ENCODE measurements at regions of chr12 and their contacts with region 1.

Region 1: GRCh38 chr12:27434673-27435565 is 11.6 kb upstream of the SMCO2 start:
- DNase-seq: peak in 1 of 2 experiments; percentile 26
- ATAC-seq: peak; percentile 79 to 87
- H3K4me3 ChIP-seq: no peak overlapping the region
- H3K27ac ChIP-seq: peak overlapping the region in 1 of 2 experiments; percentile 34; a peak in 2 of 6 replicates
- H3K4me1 ChIP-seq: no peaks in the 10 kb centered on the region
- CTCF ChIP-seq: peak; percentile 47
- EP300 ChIP-seq: no peak
- POLR2A ChIP-seq: no peak
- RAD21 ChIP-seq: peak; percentile 44 to 72

Region 2: DNA sequence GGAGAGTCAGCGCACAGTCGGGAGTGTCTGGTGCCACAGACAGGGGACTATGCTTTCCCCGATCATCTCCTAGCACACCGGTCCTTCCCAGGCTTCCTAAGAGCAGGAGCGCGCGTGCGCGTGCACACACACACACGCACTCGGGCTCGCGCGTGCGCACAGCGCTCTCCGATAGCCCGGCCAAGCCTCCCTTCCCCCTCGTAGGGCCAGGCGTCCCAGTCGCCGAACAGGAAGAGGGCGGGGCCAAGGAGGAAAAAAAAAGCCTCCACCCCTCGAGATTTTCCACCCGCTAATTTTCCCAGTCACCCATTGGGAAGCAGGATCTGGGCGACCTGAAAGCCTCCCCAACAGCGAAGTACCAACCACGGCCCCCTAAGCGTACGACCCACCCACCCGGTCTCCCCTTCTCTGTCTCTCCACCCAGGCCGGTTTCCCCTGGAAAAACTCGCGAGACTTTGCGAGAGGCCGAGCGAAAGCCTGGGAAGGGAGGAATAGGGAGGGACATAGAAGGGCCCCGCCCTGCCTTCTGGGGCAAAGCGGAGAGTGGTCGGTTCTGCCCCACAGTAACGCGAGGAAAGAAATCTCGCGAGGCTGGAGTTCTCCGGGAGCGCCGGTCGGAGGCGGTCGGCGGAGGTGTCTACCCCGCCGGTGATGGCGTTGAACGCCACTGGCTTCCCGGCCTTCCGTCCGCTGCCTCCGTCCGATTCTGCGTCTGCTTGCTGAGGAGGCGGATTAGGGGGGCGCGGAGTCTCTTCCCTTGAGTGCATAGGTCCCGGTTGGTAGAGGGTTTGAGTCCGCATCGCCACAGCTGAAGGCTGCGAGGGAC is 496.8 kb before region 1 on chr12 and contains the starts of genes FGFR1OP2 and INTS13:
- CTCF ChIA-PET with region 1: no interaction called
- POLR2A ChIA-PET with region 1: no interaction called
- DNase-seq: peak; percentile 94 to 99
- ATAC-seq: peak; percentile 92 to 98
- H3K4me3 ChIP-seq: peak within 1 kb of the TSS; percentile 94
- H3K27ac ChIP-seq: peak within 1 kb of the TSS; percentile 89 to 92
- H3K4me1 ChIP-seq: peaks cover 39% of the 10 kb centered on the region; the same call in 2 of the 3 replicates
- CTCF ChIP-seq: no peak
- EP300 ChIP-seq: no peak
- POLR2A ChIP-seq: peak; percentile 99
- RAD21 ChIP-seq: no peak
- polyA plus RNA-seq, gene FGFR1OP2: 37.0 and 51.1 TPM in 2 replicates
- polyA plus RNA-seq, gene INTS13: 41.2 and 71.7 TPM in 2 replicates

Region 3: DNA sequence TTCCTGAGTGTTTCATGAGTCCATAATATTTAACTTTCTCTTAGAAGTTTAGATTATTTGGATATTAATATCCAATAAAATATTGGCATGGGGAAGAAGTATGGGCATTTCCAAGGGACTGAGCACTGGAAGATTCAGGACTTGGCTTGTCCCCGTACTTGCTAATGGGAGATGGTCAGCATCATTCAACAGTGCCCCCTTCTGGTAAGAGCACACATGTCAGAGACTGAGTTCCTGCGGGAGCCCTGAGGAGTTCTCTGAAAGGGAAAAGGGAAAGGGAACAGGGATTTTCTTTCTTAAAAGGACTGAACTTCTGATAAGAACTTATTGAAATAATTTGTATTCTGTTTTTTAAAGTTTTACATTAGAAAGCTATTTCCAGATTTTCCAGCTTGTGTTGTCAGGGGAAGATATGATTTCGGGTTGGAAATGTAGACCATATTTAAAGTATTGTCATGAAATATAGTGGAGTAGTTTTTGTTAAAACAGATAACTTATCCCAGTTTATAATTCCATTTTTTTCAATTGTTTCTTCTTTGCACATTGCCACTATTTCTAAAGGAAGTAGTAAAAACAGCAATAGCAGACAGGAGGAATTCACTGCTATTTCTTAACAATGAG is 292.7 kb before region 1 on chr12:
- CTCF ChIA-PET with region 1: no interaction called
- POLR2A ChIA-PET with region 1: no interaction called
- DNase-seq: peak; percentile 73 to 84
- ATAC-seq: peak; percentile 95 to 98; a peak in 5 of 6 replicates
- H3K4me3 ChIP-seq: no peak overlapping the region
- H3K27ac ChIP-seq: no peak overlapping the region
- H3K4me1 ChIP-seq: 0 out of 3 replicates have a peak, but pooled peaks cover 8% of the 10 kb centered on the region
- CTCF ChIP-seq: peak; percentile 74
- EP300 ChIP-seq: no peak
- POLR2A ChIP-seq: no peak
- RAD21 ChIP-seq: peak; percentile 61 to 79

Region 4: GRCh38 chr12:27343255-27344000 is 91.5 kb before region 1 on chr12:
- CTCF ChIA-PET with region 1: no interaction called
- POLR2A ChIA-PET with region 1: no interaction called
- DNase-seq: peak; percentile 46 to 79
- ATAC-seq: peak; percentile 94 to 95
- H3K4me3 ChIP-seq: no peak overlapping the region
- H3K27ac ChIP-seq: peak overlapping the region; percentile 6 to 79; a peak in 5 of 6 replicates
- H3K4me1 ChIP-seq: peaks cover 31% of the 10 kb centered on the region
- CTCF ChIP-seq: no peak
- EP300 ChIP-seq: 0 out of 5 replicates have a peak, but pooled peaks of 1 of the 2 experiments have one; percentile 12
- POLR2A ChIP-seq: no peak
- RAD21 ChIP-seq: no peak

Region 5: DNA sequence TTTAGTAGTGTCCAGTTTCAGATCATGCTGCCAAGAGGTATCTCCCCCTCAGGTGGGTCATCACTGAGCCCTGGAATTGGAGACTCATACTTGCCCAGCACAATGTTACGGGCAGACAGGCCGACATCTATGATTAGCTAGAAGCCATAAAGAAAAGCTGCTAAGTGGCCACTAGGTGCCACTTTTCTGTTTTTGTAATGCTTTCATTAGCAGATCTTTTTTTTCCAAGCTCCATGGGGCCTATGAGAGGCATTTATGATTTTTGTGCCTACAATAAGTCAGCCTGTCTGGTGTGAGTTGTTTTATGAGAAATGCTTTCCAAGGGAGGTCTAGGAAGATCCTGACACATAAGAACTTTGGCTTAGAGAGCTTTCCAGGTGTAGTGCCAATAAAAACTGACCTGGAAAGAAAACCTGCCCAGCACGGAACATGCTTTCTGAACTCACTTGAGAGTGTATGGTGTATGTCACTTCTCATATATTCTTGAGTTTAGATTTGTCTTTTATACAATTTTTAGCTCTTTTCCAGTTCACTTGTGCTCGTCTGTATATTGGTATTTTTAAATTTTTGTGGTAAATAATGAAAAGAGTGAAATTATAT is 10.2 kb before region 1 on chr12:
- CTCF ChIA-PET with region 1: interaction called, 25 read pairs
- POLR2A ChIA-PET with region 1: no interaction called
- DNase-seq: peak; percentile 37 to 62
- ATAC-seq: peak; percentile 85 to 90
- H3K4me3 ChIP-seq: no peak overlapping the region
- H3K27ac ChIP-seq: no peak overlapping the region
- H3K4me1 ChIP-seq: no peaks in the 10 kb centered on the region
- CTCF ChIP-seq: peak; percentile 58
- EP300 ChIP-seq: no peak
- POLR2A ChIP-seq: no peak
- RAD21 ChIP-seq: peak; percentile 60 to 61

Region 6: DNA sequence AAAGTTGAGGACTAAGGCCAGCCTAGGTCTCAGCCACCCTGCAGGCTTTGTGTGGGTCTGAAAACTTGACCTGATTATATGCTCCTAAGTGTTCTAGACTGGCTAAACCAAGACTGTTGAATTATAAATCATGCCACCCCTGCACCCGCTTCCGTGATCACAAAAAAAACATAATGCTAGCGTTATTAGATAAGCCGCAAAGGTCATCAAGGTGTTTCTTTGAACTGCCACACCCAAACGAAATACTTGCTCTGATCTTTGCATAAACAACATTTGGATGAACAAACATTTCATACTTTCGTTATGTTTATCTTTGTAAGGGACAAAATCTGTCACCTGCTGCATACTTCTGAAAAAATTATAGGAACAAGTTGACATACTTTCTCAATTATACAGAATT is 14.1 kb after region 1 on chr12:
- CTCF ChIA-PET with region 1: interaction called, 27 read pairs
- POLR2A ChIA-PET with region 1: no interaction called
- DNase-seq: no peak
- ATAC-seq: no peak
- H3K4me3 ChIP-seq: no peak overlapping the region
- H3K27ac ChIP-seq: no peak overlapping the region
- H3K4me1 ChIP-seq: no peaks in the 10 kb centered on the region
- CTCF ChIP-seq: no peak
- EP300 ChIP-seq: no peak
- POLR2A ChIP-seq: no peak
- RAD21 ChIP-seq: no peak

Region 7: GRCh38 chr12:27635349-27635972 is 200.5 kb after region 1 on chr12:
- CTCF ChIA-PET with region 1: interaction called, 30 read pairs
- POLR2A ChIA-PET with region 1: no interaction called
- DNase-seq: peak; percentile 41 to 67
- ATAC-seq: peak in 1 of 2 experiments; percentile 68; a peak in 3 of 6 replicates
- H3K4me3 ChIP-seq: no peak overlapping the region
- H3K27ac ChIP-seq: peak overlapping the region in 1 of 2 experiments; percentile 70; a peak in 3 of 6 replicates
- H3K4me1 ChIP-seq: peaks cover 10% of the 10 kb centered on the region; the same call in 2 of the 3 replicates
- CTCF ChIP-seq: peak; percentile 81
- EP300 ChIP-seq: no peak
- POLR2A ChIP-seq: no peak
- RAD21 ChIP-seq: peak; percentile 90 to 93